ENCODE measurements at regions of chr19 and their contacts with region 1.

Region 1: GRCh38 chr19:27974082-27974513 is 1238.9 kb downstream of the UQCRFS1 start:
- H3K4me3 ChIP-seq: no peak overlapping the region
- H3K27ac ChIP-seq: no peak overlapping the region
- H3K4me1 ChIP-seq: peaks cover 16% of the 10 kb centered on the region
- CTCF ChIP-seq: peak; percentile 82

Region 2: GRCh38 chr19:27793644-27794493 is 180.2 kb before region 1 on chr19:
- CTCF ChIA-PET with region 1: interaction called, 7 read pairs
- POLR2A ChIA-PET with region 1: interaction called, 16 read pairs
- H3K4me3 ChIP-seq: peak overlapping the region; percentile 65
- H3K27ac ChIP-seq: peak overlapping the region; percentile 97
- H3K4me1 ChIP-seq: peaks cover 15% of the 10 kb centered on the region
- CTCF ChIP-seq: peak; percentile 76

Region 3: GRCh38 chr19:27858981-27859581 is 115.0 kb before region 1 on chr19:
- CTCF ChIA-PET with region 1: no interaction called
- POLR2A ChIA-PET with region 1: no interaction called
- H3K4me3 ChIP-seq: no peak overlapping the region
- H3K27ac ChIP-seq: no peak overlapping the region
- H3K4me1 ChIP-seq: no peaks in the 10 kb centered on the region
- CTCF ChIP-seq: no peak

Region 4: DNA sequence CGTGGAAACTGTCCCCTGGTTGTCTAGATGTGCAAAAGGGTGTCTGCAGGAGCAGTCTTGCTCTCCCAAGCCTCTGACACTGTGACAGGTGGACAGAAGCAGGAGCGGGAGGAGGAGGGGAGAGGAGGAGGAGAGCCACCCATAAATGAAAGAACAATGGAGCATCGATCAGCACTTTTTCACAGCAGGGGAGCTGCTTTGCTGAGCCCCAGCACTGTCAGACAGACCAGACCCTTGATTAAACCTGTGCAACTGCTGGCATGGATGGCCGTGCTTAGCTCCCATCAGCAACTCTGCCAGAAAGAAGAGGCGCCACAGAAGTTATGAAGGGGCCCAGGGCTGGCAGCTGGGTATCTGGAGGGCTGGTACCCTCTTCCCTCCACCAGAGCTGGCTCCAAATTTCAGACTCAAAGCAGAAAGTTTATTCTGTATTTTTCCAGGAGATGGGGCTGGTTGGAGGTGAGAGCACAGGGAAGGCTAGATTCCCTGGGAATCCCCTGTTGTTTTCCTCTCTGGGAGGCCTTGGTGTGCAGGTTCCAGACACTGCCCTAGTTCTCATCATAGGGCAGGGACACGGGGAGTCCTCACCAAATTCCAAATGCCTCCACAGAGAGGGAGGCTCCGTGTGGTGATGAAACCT is 46.6 kb after region 1 on chr19:
- CTCF ChIA-PET with region 1: interaction called, 10 read pairs
- POLR2A ChIA-PET with region 1: no interaction called
- H3K4me3 ChIP-seq: no peak overlapping the region
- H3K27ac ChIP-seq: no peak overlapping the region
- H3K4me1 ChIP-seq: no peaks in the 10 kb centered on the region
- CTCF ChIP-seq: no peak

Region 5: DNA sequence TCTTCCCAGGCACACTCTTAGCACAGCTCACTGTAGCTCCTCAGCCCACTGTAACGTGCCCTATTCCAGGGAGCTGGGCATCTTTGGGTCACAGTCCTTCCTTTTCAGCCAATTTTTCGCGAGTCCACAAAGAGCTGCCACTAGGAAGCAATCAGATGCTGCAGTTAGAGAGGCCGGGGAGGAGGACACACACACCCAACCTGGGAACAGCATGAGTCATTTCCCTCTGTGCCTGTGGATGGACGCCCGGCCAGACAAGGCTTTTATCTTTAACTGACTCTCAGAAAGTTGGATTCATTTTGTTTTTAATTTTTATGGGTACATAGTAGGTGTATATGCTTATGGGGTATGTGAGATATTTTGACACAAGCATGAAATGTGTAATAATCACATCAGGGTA is 320.3 kb after region 1 on chr19:
- CTCF ChIA-PET with region 1: interaction called, 14 read pairs
- POLR2A ChIA-PET with region 1: no interaction called
- H3K4me3 ChIP-seq: no peak overlapping the region
- H3K27ac ChIP-seq: no peak overlapping the region
- H3K4me1 ChIP-seq: peaks cover 50% of the 10 kb centered on the region
- CTCF ChIP-seq: no peak

Region 6: DNA sequence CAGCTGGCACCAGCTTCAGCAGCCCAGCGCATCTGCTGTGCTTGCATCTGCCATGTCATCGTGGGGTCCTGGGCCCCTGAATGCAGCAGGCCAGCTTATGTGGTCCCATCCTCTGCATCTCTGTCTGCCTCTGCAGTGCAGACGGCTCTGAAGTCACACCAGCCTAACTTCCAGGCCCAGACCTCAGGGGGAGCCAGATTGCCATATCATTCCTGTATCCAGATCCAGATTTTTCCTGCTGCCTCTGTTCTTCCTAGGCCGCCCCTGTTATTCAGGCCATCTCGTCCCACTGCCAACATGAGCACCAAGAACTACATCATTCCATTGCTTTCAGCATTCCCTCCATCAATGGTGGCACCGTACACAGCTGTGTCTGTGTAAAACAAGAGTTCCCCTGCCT is 667.3 kb after region 1 on chr19:
- CTCF ChIA-PET with region 1: interaction called, 10 read pairs
- POLR2A ChIA-PET with region 1: no interaction called
- H3K4me3 ChIP-seq: no peak overlapping the region
- H3K27ac ChIP-seq: no peak overlapping the region
- H3K4me1 ChIP-seq: no peaks in the 10 kb centered on the region
- CTCF ChIP-seq: no peak

Region 7: DNA sequence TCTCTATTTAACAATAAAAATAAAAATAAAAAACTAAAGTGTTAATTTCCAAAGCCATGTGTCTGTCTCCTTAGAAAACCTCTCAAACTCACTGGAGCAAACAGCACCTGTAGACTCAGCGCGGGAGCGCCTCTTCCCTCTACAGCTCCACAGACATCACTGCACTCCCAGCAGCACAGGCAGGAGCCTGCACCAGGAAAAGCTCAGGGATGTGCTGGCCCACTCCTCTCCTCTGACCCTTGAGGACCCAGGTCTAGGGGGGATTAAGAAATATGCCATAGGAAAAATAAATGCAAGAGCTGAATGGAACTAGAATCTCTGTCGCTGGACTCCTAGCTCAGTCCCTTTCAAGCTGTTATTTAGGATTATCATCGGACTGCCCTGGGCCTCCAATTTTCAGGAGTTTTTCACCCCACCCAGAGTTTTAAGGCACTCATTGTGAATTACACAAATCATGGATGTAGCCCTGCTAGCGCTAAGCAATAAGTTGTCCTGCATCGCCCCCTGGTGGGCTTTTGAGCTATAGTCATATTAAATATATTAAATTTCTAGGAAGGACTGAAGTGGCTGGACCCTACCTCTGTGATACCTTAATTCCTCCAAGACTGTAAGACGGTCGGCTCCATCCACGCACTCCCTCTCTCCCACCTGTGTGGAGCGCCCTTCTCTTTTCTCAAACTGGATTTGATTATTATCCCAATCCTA is 904.9 kb after region 1 on chr19:
- CTCF ChIA-PET with region 1: interaction called, 35 read pairs
- POLR2A ChIA-PET with region 1: interaction called, 3 read pairs
- H3K4me3 ChIP-seq: no peak overlapping the region
- H3K27ac ChIP-seq: no peak overlapping the region
- H3K4me1 ChIP-seq: peaks cover 4% of the 10 kb centered on the region; the same call in 1 of the 2 replicates
- CTCF ChIP-seq: peak; percentile 65; the same call in 1 of the 2 replicates